Common myeloid progenitor, CD34-positive (primary cell): ENCODE measurements at regions of chr22 and their contacts with region 1.

Region 1: DNA sequence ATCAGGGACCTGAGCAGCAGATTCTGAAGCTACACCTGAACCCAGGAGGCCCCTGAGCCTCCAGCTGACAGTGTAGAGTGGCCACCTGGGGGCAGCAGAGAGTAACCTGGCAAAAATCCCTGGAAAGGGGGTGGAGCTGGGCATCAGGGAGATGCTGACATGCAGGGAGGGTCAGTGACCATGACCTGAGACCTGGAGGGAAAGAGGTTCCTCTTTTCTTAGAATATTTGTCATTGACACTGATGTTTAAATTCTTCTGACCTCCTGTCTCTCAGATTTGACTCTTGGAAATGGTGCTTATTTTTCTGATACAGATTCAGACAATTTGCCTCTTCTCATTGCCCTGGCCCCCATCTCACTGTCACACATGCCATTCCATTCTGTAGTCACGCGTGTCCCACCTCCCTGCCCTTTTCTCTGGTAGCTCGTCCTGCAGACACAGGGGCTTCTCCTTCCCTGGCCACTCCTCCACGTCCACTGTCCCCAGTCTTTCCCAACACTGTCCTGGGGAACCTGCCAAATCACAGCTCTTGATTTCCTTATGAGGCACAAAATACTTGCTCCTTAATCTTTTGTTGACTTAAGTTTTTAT is 117.2 kb upstream of the IGLL5 start:
- DNase-seq: peak; percentile 36 to 56 (median 47)
- H3K4me3 ChIP-seq: no peak overlapping the region
- H3K27ac ChIP-seq: no peak overlapping the region
- H3K4me1 ChIP-seq: no peaks in the 10 kb centered on the region
- H3K27me3 ChIP-seq: peaks cover 0 to 7% (median 5%) of the 10 kb centered on the region in 5 experiments

Region 2: DNA sequence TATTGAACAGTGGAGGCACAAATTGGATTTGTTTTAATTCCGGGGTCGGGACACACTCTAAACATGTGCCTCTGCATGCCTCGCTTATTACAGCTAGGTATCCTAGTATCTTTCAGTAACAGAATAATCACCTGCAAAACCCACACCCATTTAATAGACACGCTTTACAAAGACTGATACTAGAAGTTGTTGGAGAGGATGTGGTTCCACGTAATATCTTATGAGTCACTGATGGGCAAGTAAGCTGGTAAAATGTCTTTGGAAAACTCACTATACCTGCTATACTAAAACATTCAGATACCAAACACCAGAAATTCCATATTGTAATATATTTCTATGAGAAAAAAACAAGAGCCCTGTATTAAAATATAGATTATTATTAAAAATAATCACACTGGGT is 42.0 kb before region 1 on chr22:
- CTCF ChIA-PET with region 1: no interaction called
- POLR2A ChIA-PET with region 1: no interaction called
- DNase-seq: no peak
- H3K4me3 ChIP-seq: no peak overlapping the region
- H3K27ac ChIP-seq: no peak overlapping the region
- H3K4me1 ChIP-seq: no peaks in the 10 kb centered on the region
- H3K27me3 ChIP-seq: no peaks in the 10 kb centered on the region

Region 3: DNA sequence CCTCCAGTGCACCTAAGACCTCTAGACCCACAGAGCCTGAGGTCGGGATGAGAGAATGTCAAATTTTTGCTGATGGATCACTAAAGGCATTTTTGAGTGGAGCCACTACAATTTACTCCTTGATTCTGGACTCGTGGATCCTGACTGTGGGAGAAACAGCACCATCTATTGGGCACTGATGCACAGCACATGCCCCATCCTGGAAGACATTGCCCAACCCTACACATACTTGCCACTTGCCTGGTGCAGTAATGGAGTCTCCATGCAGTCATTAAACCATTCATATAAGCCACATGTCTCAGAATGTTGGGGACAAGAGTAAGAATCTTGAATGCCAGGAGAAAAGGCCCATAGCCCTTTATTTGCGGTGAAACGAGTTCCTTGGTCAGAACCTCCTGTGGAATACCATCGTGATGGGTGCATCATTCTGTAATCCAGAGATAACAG is 22.1 kb before region 1 on chr22:
- CTCF ChIA-PET with region 1: interaction called, 14 read pairs
- POLR2A ChIA-PET with region 1: no interaction called
- DNase-seq: peak in 2 of 3 donors; percentile 59 to 61
- H3K4me3 ChIP-seq: no peak overlapping the region
- H3K27ac ChIP-seq: no peak overlapping the region
- H3K4me1 ChIP-seq: peaks cover 0 to 10% (median 8%) of the 10 kb centered on the region in 4 experiments
- H3K27me3 ChIP-seq: peaks cover 0 to 7% (median 3%) of the 10 kb centered on the region in 5 experiments

Region 4: GRCh38 chr22:22753526-22754267 is 16.7 kb before region 1 on chr22:
- CTCF ChIA-PET with region 1: interaction called, 14 read pairs
- POLR2A ChIA-PET with region 1: no interaction called
- DNase-seq: peak; percentile 43 to 76 (median 72)
- H3K4me3 ChIP-seq: no peak overlapping the region
- H3K27ac ChIP-seq: no peak overlapping the region
- H3K4me1 ChIP-seq: peaks cover 0 to 11% (median 8%) of the 10 kb centered on the region in 4 experiments
- H3K27me3 ChIP-seq: peaks cover 0 to 1% (median 0%) of the 10 kb centered on the region in 5 experiments

Region 5: DNA sequence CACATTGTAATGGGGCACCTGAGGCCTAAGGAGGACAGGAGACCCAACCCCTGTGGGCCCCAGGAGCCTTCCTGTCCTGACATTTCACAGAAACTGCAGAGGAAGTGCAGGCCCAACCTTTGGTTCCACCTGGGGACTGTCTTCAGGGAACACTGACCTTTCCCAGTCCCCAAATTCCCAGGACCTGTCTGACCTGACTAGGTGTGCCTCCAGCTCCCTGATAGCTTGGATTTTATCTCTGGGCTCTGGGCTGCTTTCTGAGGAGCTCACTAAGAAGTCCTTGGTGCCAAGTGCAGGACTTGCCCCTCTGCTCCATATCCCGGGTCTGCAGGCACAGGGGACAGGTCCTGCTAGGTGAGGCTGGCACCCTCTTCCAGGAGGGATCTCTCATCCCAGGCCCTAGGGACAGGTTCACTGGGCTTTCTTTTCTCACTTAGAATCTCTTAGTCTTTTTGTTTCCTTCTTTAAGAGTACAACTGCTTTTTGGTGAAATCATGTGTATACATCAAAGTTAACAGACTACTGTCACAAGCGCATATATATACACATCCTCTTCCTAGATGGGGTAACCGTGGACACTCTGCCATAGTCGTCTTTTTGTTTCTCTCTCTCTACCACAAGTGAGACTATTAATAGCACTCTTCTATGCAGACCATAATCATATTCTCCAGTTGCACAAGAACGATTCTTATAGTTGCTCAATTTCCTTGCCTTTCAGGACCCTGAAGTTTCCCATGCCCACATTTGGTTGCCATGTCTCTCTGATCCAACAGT is 45.2 kb after region 1 on chr22:
- CTCF ChIA-PET with region 1: no interaction called
- POLR2A ChIA-PET with region 1: no interaction called
- DNase-seq: peak in 2 of 3 donors; percentile 37 to 39
- H3K4me3 ChIP-seq: peak overlapping the region in 1 of 7 experiments; percentile 17
- H3K27ac ChIP-seq: no peak overlapping the region
- H3K4me1 ChIP-seq: peaks cover 3 to 64% (median 26%) of the 10 kb centered on the region in 4 experiments
- H3K27me3 ChIP-seq: no peaks in the 10 kb centered on the region

Region 6: GRCh38 chr22:22976033-22976922 is 205.9 kb after region 1 on chr22:
- CTCF ChIA-PET with region 1: no interaction called
- POLR2A ChIA-PET with region 1: no interaction called
- DNase-seq: no peak
- H3K4me3 ChIP-seq: no peak overlapping the region
- H3K27ac ChIP-seq: no peak overlapping the region
- H3K4me1 ChIP-seq: no peaks in the 10 kb centered on the region
- H3K27me3 ChIP-seq: peaks cover 0 to 11% (median 0%) of the 10 kb centered on the region in 5 experiments